Gastrocnemius medialis (tissue), 4 donors: ENCODE measurements at regions of chr1 and their contacts with region 1.

Region 1: DNA sequence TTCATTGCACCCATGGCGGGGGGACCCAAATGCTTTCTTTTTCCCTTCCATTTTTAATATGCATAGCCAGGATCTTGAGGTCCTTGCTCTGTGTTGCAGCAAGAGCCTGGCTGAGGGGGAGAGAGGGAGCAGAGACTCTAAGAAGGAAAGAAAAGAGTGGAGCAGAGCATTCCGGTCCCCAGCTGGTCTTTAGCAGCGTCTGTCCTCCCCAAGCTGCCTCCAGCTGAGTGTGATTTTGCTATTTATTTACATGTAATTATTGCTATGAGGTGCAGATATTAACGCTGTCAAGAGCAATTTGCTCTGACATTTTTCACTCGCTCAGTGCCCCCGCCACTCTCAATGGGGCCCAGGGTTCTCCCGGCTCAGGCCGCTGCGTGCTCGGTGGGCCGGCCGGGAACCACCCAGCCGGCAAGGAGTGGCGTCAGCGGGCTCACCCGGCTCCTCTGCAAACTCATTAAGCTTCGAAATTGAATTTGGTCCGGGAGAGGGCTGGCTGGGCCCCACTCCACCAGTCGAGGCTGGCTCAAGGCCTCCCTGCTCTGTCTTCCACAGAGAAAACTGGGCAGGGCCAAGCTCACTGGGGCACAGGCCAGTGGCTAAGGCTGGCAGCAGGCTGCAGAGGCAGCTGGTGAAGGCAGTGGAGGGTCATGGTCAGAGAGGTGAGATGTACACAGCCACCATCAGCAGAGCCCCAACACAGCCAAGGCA is 93.2 kb downstream of the PAX7 start:
- DNase-seq: no peak
- ATAC-seq: no peak
- H3K4me3 ChIP-seq: no peak overlapping the region
- H3K27ac ChIP-seq: no peak overlapping the region
- H3K4me1 ChIP-seq: no peaks in the 10 kb centered on the region
- H3K27me3 ChIP-seq: peaks cover 5 to 21% (median 8%) of the 10 kb centered on the region in 3 donors
- CTCF ChIP-seq: no peak
- POLR2A ChIP-seq: no peak

Region 2: DNA sequence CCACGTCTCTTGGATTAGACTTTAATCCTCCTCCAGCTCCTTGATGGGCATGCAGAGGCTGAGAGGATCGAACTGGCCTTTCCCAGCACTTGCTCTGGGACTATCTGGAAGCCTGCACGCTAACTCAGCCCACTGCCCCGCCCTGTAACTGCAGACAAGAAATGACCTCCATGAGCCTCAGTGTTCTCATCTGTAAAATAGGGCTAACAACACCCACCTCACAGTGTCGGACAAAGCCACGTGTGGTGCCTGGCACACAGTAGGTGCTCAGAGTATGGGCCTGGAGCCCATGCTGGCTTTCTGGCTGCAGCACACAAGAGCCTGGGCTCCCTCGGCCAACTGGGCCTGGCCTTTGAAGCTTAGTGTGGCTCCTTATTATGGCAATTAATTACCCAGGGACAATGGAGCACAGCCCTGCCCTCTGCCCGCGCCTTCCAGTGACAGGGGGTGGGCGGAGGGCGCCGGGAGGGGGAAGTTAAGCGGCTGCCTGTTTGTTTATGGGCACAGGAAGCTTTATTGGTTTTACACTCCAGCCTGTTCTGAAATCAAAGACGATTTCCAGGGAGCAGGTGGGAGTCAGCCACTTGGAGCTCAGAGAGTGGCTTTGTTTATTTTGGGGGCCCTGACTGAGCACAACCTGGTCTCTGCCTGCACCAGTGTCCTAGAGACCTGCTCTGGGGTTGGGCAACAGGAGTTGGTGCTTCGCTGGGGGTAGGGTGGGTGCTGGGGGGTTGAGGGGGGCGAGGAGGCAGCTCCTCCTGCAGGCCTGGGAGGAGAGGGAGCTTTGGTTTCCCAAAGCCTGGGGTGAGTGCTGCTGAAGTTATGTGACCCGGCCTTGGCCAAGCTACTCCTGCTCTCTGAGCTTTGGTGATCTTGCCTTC is 62.2 kb before region 1 on chr1:
- in situ Hi-C with region 1: no loop called
- intact Hi-C with region 1: no loop called
- DNase-seq: no peak
- ATAC-seq: no peak
- H3K4me3 ChIP-seq: no peak overlapping the region
- H3K27ac ChIP-seq: no peak overlapping the region
- H3K4me1 ChIP-seq: no peaks in the 10 kb centered on the region
- H3K27me3 ChIP-seq: no peaks in the 10 kb centered on the region
- CTCF ChIP-seq: no peak
- POLR2A ChIP-seq: no peak

Region 3: GRCh38 chr1:18673975-18674374 is 49.9 kb before region 1 on chr1:
- in situ Hi-C with region 1: no loop called
- intact Hi-C with region 1: loop called (anchors 10 kb)
- DNase-seq: no peak
- ATAC-seq: no peak
- H3K4me3 ChIP-seq: no peak overlapping the region
- H3K27ac ChIP-seq: no peak overlapping the region
- H3K4me1 ChIP-seq: no peaks in the 10 kb centered on the region
- H3K27me3 ChIP-seq: peaks cover 0 to 12% (median 2%) of the 10 kb centered on the region in 3 donors
- CTCF ChIP-seq: no peak
- POLR2A ChIP-seq: no peak

Region 4: GRCh38 chr1:18805925-18806849 is 82.3 kb after region 1 on chr1:
- in situ Hi-C with region 1: no loop called
- intact Hi-C with region 1: loop called (anchors 10 kb)
- DNase-seq: no peak
- ATAC-seq: no peak
- H3K4me3 ChIP-seq: no peak overlapping the region
- H3K27ac ChIP-seq: no peak overlapping the region
- H3K4me1 ChIP-seq: peaks cover 3 to 4% of the 10 kb centered on the region in 2 donors
- H3K27me3 ChIP-seq: peaks cover 0 to 12% (median 0%) of the 10 kb centered on the region in 3 donors
- CTCF ChIP-seq: no peak
- POLR2A ChIP-seq: no peak